WTC11 (cell line): ENCODE measurements at regions of chr13 and their contacts with region 1.

Region 1: DNA sequence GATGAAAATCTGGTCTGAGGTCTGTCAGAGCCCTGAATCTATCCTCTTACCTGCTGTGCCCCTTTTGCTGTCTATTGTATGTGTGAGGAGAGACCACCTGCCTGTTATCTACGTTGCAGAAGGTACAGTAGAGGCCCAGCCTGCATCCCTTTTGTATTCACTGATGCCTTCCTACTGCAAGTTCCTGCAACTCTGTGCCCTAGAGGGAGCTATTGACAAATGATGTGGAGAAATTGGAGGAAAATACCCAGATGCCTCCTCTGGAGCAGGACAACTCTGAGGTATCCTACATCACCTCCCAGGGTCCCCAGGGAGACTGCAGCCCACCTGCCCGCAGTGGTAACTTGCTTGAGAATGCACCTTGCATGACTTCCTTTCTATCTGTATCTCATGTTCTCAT is 33.7 kb downstream of the SIAH3 start:
- DNase-seq: no peak
- ATAC-seq: peak; percentile 73
- H3K4me3 Mint-ChIP-seq: no peak overlapping the region
- H3K27ac Mint-ChIP-seq: no peak overlapping the region
- H3K4me1 Mint-ChIP-seq: peaks cover 18% of the 10 kb centered on the region
- H3K27me3 Mint-ChIP-seq: no peaks in the 10 kb centered on the region
- CTCF ChIP-seq: no peak

Region 2: GRCh38 chr13:45623515-45624090 is 194.2 kb before region 1 on chr13:
- CTCF ChIA-PET with region 1: no interaction called
- POLR2A ChIA-PET with region 1: no interaction called
- DNase-seq: no peak
- ATAC-seq: no peak; the same call in 1 of the 2 replicates
- H3K4me3 Mint-ChIP-seq: no peak overlapping the region
- H3K27ac Mint-ChIP-seq: no peak overlapping the region
- H3K4me1 Mint-ChIP-seq: peaks cover 37% of the 10 kb centered on the region
- H3K27me3 Mint-ChIP-seq: peaks cover 11% of the 10 kb centered on the region; the same call in 1 of the 2 replicates
- CTCF ChIP-seq: no peak

Region 3: DNA sequence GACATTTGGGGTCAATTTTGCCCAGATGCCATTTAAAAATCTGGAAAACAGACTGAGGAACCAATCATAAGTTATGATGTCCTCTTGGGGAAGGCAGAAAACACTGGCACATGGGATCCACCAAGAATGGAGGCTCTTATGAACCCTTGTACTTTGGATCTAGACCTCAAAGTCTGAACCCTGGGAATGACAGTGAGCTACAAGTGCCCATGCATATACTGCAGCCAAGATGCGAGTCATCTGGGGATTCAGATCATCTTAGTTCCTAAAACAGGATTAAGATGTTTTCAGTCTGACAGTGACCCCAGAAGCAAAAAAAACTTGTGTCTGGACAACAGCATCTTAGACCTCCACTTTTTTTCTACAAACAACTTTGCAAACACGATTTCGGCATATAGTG is 133.9 kb after region 1 on chr13:
- CTCF ChIA-PET with region 1: interaction called, 10 read pairs
- POLR2A ChIA-PET with region 1: no interaction called
- DNase-seq: no peak
- ATAC-seq: no peak
- H3K4me3 Mint-ChIP-seq: no peak overlapping the region
- H3K27ac Mint-ChIP-seq: no peak overlapping the region
- H3K4me1 Mint-ChIP-seq: no peaks in the 10 kb centered on the region
- H3K27me3 Mint-ChIP-seq: no peaks in the 10 kb centered on the region
- CTCF ChIP-seq: no peak